MCF 10A (cell line): ENCODE measurements at regions of chr6 and their contacts with region 1.

Region 1: GRCh38 chr6:25369433-25370181 is 90.4 kb downstream of the CARMIL1 start:
- DNase-seq: peak; percentile 16
- H3K4me3 Mint-ChIP-seq: no peak overlapping the region
- H3K27ac Mint-ChIP-seq: peak overlapping the region; percentile 62
- H3K4me1 Mint-ChIP-seq: peaks cover 24% of the 10 kb centered on the region
- H3K27me3 Mint-ChIP-seq: no peaks in the 10 kb centered on the region
- CTCF ChIP-seq: no peak

Region 2: DNA sequence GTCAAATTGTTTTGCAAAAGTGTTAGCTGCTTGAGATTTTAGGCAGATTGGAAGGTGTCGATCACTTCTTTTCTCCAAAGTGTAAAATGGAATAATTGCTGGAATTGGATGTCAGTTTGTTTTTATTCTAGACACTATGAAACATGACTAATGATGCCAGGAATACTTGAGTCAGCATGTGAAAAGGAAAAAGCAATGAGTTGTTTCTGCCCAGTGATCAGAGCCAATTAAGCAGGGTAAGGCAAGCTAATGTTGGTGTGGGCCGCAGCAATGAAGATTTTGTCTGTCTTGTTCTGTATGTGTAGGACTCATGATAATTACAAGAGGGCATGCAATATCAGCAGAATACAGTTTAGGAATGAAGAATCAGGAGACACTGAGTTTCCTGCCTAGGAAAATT is 19.9 kb after region 1 on chr6:
- CTCF ChIA-PET with region 1: interaction called, 7 read pairs
- POLR2A ChIA-PET with region 1: interaction called, 11 read pairs
- intact Hi-C with region 1: no loop called
- DNase-seq: peak; percentile 71
- H3K4me3 Mint-ChIP-seq: no peak overlapping the region
- H3K27ac Mint-ChIP-seq: peak overlapping the region; percentile 0
- H3K4me1 Mint-ChIP-seq: peaks cover 16% of the 10 kb centered on the region
- H3K27me3 Mint-ChIP-seq: no peaks in the 10 kb centered on the region
- CTCF ChIP-seq: no peak

Region 3: GRCh38 chr6:25564943-25565342 is 195.3 kb after region 1 on chr6:
- CTCF ChIA-PET with region 1: no interaction called
- POLR2A ChIA-PET with region 1: no interaction called
- intact Hi-C with region 1: no loop called
- DNase-seq: no peak
- H3K4me3 Mint-ChIP-seq: no peak overlapping the region
- H3K27ac Mint-ChIP-seq: no peak overlapping the region
- H3K4me1 Mint-ChIP-seq: no peaks in the 10 kb centered on the region
- H3K27me3 Mint-ChIP-seq: no peaks in the 10 kb centered on the region
- CTCF ChIP-seq: no peak